Activated CD4-positive, alpha-beta memory T cell treated with anti-CD3 and anti-CD28 coated beads, Interleukin-2, amount 10 ng/mL, durations not matched to agents 7 days and 5 days (primary cell): ENCODE measurements at regions of chr6 and their contacts with region 1.

Region 1: DNA sequence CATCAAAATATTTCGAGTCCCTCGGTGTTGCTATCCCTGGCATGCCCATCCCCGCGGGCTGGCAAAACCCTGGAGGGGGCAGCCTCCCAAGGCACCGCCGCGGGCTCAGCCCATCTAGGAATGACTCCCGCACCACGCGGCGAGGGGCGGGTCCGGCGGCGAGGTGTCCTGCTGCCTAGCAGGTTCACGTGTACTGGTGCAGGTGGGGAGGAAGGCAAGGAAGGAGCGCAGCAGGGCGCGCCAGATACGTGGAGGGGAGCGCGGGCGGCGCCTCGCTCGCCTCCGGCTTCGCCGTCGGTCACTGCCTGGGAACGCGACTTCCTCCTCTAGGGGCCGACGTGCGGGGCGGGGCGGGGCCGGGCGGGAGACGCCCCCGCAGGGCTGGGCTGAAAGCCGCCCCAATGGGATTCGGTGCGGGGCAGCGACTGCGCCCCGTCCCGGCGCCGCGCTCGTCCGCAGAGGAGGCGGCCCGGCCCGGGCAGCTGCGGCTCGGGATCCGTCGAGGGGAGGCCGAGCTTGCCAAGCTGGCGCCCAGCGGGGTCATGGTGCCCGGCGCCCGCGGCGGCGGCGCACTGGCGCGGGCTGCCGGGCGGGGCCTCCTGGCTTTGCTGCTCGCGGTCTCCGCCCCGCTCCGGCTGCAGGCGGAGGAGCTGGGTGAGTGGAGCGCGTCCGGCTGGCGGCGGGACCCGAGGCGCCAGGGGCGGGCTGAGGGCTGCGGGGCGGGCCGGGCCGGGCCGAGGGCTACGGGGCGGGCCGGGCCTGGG is at the start of gene DCBLD1:
- DNase-seq: peak; percentile 76
- H3K4me3 Mint-ChIP-seq: peak within 1 kb of the TSS; percentile 81
- H3K27ac Mint-ChIP-seq: peak within 1 kb of the TSS; percentile 68
- H3K4me1 Mint-ChIP-seq: peaks cover 24% of the 10 kb centered on the region
- H3K27me3 Mint-ChIP-seq: peaks cover 30% of the 10 kb centered on the region
- total RNA-seq, gene DCBLD1: 7.8 to 10.6 TPM

Region 2: GRCh38 chr6:117502580-117502979 is 20.2 kb after region 1 on chr6:
- CTCF ChIA-PET with region 1: no interaction called
- POLR2A ChIA-PET with region 1: no interaction called
- DNase-seq: no peak
- H3K4me3 Mint-ChIP-seq: no peak overlapping the region
- H3K27ac Mint-ChIP-seq: no peak overlapping the region
- H3K4me1 Mint-ChIP-seq: peaks cover 8% of the 10 kb centered on the region
- H3K27me3 Mint-ChIP-seq: no peaks in the 10 kb centered on the region

Region 3: GRCh38 chr6:117547688-117548621 is 65.5 kb after region 1 on chr6:
- CTCF ChIA-PET with region 1: interaction called, 30 read pairs
- POLR2A ChIA-PET with region 1: interaction called, 57 read pairs
- DNase-seq: peak; percentile 58
- H3K4me3 Mint-ChIP-seq: peak overlapping the region; percentile 75
- H3K27ac Mint-ChIP-seq: peak overlapping the region; percentile 94
- H3K4me1 Mint-ChIP-seq: peaks cover 44% of the 10 kb centered on the region
- H3K27me3 Mint-ChIP-seq: no peaks in the 10 kb centered on the region

Region 4: DNA sequence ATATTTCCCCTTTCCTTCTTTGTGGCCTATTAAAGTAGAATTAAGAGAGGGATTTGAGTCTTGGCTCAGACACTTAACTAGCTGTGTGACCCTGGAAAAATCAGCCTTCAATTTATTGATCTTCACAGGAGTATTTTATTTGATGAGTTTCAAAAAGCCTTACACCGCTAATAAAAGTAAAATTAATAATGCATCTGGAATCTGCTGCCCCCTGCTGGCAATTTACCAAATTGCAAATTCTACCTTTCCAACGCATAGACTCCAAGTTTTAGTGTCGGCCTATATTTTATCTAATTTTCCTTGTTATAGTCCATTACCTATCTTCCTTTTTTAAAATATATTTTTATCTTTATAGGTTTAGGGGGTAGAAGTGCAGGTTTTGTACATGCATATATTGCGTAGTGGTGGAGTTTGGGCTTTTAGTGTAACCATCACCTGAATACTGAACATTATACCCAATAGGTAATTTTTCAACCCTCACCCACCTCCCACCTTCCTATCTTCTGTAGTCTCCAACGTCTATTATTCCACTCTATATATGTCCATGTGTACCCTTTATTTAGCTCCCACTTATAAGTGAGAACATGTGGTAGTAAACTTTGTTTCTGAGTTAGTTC is 73.6 kb after region 1 on chr6:
- CTCF ChIA-PET with region 1: interaction called, 26 read pairs
- POLR2A ChIA-PET with region 1: interaction called, 8 read pairs
- DNase-seq: peak; percentile 54
- H3K4me3 Mint-ChIP-seq: no peak overlapping the region
- H3K27ac Mint-ChIP-seq: no peak overlapping the region
- H3K4me1 Mint-ChIP-seq: peaks cover 7% of the 10 kb centered on the region
- H3K27me3 Mint-ChIP-seq: no peaks in the 10 kb centered on the region